ENCODE measurements at regions of chr13 and their contacts with region 1.

Region 1: GRCh38 chr13:94549232-94550061 is 46.5 kb downstream of the TGDS start:
- DNase-seq: peak; percentile 99

Region 2: GRCh38 chr13:94312511-94313216 is 236.8 kb before region 1 on chr13:
- CTCF ChIA-PET with region 1: no interaction called
- POLR2A ChIA-PET with region 1: no interaction called
- DNase-seq: no peak

Region 3: DNA sequence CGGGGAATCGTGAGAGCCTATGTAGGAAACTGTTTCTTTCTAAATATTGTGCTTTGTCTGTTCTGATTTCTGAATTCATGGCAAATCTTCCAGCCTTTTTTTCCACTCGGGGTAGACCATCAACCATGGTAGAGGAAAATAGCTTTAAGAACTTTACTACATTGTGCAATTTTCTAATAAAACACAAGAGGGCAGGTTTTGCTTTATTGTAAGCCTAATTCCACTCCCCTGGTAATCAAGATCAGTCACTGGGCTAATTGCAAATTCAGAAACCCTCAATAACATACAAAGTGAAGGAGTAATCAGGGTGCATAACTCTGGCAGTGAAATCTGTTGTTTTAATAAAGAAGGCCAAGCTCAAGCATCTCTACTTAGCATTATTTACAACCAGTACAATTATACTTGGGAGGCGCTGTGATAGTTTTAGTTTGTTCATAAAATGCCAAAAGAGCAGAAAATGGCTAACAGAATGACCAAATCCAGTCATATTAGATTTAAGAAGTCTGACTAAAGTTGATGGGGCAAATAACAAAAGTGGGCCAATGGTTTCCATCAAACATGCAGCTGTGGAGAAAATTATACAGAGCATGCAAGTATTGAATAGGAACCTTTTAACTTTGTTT is 113.7 kb before region 1 on chr13:
- CTCF ChIA-PET with region 1: interaction called, 12 read pairs
- POLR2A ChIA-PET with region 1: interaction called, 46 read pairs
- DNase-seq: peak; percentile 80

Region 4: GRCh38 chr13:94534166-94534565 is 15.3 kb before region 1 on chr13:
- CTCF ChIA-PET with region 1: interaction called, 4 read pairs
- POLR2A ChIA-PET with region 1: interaction called, 38 read pairs
- DNase-seq: no peak

Region 5: DNA sequence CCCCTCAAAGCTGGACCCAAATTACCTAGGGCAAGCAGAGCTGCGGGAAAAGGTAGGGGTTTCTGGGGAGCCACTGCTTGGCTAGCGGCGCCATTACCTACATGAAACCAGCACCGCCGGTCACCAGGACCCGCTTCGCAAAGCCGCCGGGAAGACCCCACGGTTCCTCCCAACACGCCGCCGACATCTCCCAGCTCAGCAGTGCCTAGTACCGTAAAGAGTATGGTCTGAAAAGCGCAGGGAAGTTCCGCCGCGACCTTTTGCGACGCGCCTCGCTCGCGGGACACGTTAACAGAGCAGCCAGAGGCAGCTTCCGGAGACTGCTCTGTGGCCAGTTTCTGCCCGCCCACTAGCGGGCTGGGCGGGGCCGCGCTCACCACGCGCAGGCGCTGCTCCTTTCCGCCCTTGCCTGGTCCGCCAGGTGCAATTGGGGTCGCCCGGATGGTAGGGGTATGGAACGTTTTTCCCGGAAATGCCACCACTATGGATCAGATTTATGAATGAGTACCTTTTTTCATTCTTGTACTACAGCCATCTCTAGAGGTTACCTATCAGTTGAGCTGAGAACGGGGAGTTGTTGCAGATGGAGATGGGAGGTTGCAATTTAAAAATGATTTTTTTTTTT is 46.6 kb after region 1 on chr13 and contains the start of gene TGDS:
- CTCF ChIA-PET with region 1: no interaction called
- POLR2A ChIA-PET with region 1: interaction called, 66 read pairs
- DNase-seq: peak; percentile 100

Region 6: GRCh38 chr13:94620286-94620896 is 70.9 kb after region 1 on chr13:
- CTCF ChIA-PET with region 1: interaction called, 10 read pairs
- POLR2A ChIA-PET with region 1: interaction called, 7 read pairs
- DNase-seq: peak; percentile 75

Measured in HEK293T (cell line).